Posterior vena cava (tissue), 2 donors: ENCODE measurements at regions of chr17 and their contacts with region 1.

Region 1: GRCh38 chr17:83024218-83024971 is 55.0 kb upstream of the METRNL start:
- DNase-seq: no peak

Region 2: DNA sequence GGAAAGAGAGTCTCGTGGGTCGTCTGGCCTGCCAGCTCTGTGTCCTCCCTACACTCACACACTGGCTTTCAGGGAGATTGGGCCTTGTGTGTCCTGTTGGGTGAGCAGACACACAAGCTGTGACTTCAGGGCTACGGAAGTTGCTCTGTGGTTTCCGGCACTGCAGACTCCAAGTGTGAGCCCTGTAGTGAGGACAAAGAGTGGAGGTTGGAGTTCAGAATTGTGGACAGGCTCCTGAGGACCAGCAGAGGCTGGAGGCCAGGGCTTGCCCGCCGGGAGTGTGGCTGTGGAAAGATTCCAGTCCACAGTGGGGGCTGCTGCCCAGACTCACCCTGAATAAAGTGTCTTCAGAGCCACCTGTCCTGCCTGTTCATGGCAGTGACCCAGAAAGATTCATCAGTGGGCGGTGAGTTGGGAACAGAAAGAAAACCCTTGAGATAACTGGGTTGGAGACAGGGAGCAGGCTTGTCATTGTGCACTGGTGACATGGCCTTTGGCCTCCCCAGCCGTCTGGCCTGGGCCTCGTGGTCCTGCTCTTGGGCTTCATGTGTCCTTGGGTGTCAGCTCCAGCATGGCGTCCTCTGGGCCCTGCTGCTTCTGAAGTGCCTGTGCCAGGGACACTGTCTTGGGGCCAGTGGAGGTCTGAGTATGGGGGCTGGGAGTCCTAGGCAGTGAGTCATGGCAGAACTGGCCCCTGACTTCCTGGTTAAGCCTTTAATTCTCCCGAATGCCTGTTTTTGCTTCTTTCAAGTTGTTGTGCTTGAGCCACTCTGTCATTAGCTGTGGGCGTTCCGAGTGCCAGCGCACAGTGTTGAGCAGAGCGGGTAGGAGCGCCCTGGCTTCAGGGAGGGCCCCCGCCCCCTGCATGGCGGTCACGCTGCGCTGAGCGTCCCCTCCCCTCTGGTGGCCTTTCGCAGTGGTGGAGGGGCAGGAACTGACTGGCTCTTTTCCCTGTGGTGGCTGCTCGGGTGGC is 164.7 kb before region 1 on chr17:
- intact Hi-C with region 1: no loop called
- DNase-seq: peak; percentile 84

Region 3: DNA sequence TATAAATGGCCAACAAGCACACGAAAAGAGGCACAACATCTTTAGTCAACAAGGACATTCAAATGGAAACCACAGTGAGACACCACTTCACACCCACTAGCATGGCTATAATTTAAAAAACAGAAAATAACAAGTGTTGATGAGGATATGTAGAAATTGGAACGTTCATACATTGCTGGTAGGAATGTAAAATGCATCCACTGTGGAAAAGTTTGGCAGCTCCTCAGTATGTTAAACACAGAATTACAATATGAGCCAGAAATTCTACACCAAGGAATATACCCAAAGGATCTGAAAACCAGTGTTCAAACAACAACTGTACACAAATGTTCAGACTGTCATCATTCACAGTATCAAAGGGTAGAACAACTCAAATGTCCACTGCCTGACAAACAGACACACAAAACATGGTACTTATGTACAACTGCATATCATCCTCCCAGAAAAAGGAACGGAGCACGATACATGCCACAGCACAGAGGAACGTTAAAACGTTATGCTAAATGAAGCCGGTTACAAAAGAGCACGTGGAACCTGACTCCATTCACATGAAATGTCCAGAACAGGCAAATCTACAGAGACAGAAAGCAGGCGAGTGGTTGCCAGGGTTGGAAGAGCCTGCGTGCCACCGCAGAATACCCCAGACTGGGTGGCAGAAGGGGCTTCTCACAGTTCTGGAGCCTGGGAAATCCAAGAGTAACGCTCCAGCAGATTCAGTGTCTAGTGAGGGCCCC is 22.2 kb after region 1 on chr17:
- intact Hi-C with region 1: loop called in 1 of 2 experiments (anchors 1 kb)
- DNase-seq: peak; percentile 9

Region 4: DNA sequence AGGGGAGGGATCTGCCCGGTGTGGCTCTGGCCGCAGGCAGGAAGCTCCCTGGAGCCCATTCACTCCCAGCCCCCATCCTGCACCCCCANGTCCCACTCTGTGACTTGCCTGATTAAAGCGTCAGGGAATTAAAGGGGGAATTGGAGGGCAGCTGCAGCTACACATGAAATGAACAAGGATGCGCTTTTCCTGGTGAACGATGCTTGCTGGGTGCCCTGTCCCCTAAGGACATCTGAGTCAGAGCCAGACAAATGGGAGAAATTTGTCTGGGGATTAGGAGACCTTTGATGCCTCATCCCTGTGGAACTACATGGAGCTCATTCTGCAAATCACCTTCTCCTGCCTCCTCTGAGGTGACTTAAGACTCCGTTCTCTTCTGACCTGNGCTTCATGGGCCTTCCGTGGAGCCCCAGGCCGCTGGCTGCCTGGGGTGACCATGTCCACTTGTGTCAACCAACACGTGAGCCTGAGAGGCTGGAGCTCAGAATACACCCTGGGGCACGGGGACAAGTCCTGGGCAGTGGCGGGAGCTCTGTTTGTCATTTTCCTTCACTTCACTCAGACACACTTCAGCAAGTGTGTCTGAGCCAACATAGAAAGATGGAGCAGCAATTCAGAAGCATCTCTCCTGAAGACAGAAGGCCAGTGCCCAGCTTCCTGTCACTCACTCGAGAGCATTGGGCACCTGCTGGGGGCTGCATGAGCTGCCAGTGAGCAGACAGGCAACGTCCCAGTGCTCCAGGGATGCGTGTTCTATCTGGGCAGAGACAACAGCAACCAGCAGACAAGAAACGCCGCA is 109.1 kb after region 1 on chr17:
- intact Hi-C with region 1: no loop called
- DNase-seq: peak; percentile 51